Mammary epithelial cell (primary cell): ENCODE measurements at regions of chr12 and their contacts with region 1.

Region 1: GRCh38 chr12:72017054-72017651 is 78.5 kb downstream of the TPH2 start:
- DNase-seq: peak; percentile 74
- H3K4me3 ChIP-seq: no peak overlapping the region
- H3K27ac ChIP-seq: no peak overlapping the region
- H3K4me1 ChIP-seq: no peaks in the 10 kb centered on the region
- H3K27me3 ChIP-seq: no peaks in the 10 kb centered on the region
- CTCF ChIP-seq: peak; percentile 73 to 85

Region 2: DNA sequence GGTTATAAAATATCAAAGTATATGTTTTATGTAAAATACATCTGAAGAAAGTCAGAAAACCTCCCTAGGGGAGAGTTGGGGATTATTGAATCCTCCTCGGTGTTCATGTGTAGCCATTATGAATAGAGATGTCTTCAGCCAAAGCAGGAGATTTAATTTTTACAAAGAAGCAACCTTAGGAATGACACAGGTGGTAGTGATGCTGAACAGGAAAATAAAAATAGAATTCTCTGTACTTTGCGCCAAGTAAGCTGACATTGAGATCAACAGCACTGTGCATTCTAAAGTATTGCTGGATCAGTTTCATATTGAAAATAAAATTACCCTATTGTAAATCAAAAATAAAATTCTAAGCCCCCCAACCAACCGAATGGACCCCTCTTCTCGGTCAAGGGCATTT is 122.3 kb after region 1 on chr12:
- CTCF ChIA-PET with region 1: no interaction called
- dilution Hi-C with region 1: no loop called
- in situ Hi-C with region 1: no loop called
- intact Hi-C with region 1: loop called (anchors 1 kb)
- DNase-seq: no peak
- H3K4me3 ChIP-seq: no peak overlapping the region
- H3K27ac ChIP-seq: no peak overlapping the region
- H3K4me1 ChIP-seq: no peaks in the 10 kb centered on the region
- H3K27me3 ChIP-seq: no peaks in the 10 kb centered on the region
- CTCF ChIP-seq: no peak

Region 3: GRCh38 chr12:72264548-72265175 is 247.5 kb after region 1 on chr12:
- CTCF ChIA-PET with region 1: no interaction called
- dilution Hi-C with region 1: no loop called
- in situ Hi-C with region 1: no loop called
- intact Hi-C with region 1: loop called (anchors 1 kb)
- DNase-seq: no peak
- H3K4me3 ChIP-seq: no peak overlapping the region
- H3K27ac ChIP-seq: no peak overlapping the region
- H3K4me1 ChIP-seq: peaks cover 9% of the 10 kb centered on the region
- H3K27me3 ChIP-seq: no peaks in the 10 kb centered on the region
- CTCF ChIP-seq: peak; percentile 48 to 57

Region 4: GRCh38 chr12:72271451-72272090 is 254.4 kb after region 1 on chr12:
- CTCF ChIA-PET with region 1: no interaction called
- dilution Hi-C with region 1: no loop called
- in situ Hi-C with region 1: loop called in 1 of 2 experiments (anchors 5 kb)
- intact Hi-C with region 1: no loop called
- DNase-seq: peak; percentile 47
- H3K4me3 ChIP-seq: peak overlapping the region; percentile 72 to 85 (median 77)
- H3K27ac ChIP-seq: peak overlapping the region; percentile 79
- H3K4me1 ChIP-seq: peaks cover 26% of the 10 kb centered on the region
- H3K27me3 ChIP-seq: no peaks in the 10 kb centered on the region
- CTCF ChIP-seq: peak in 1 of 2 donors; percentile 20

Region 5: GRCh38 chr12:72282721-72283120 is 265.6 kb after region 1 on chr12:
- CTCF ChIA-PET with region 1: no interaction called
- dilution Hi-C with region 1: no loop called
- in situ Hi-C with region 1: loop called in 1 of 2 experiments (anchors 10 kb)
- intact Hi-C with region 1: loop called (anchors 1 kb)
- DNase-seq: peak; percentile 51
- H3K4me3 ChIP-seq: no peak overlapping the region
- H3K27ac ChIP-seq: no peak overlapping the region
- H3K4me1 ChIP-seq: peaks cover 21% of the 10 kb centered on the region
- H3K27me3 ChIP-seq: no peaks in the 10 kb centered on the region
- CTCF ChIP-seq: peak; percentile 65 to 82

Region 6: GRCh38 chr12:72346363-72346944 is 329.3 kb after region 1 on chr12:
- CTCF ChIA-PET with region 1: no interaction called
- dilution Hi-C with region 1: no loop called
- in situ Hi-C with region 1: no loop called
- intact Hi-C with region 1: loop called (anchors 2 kb)
- DNase-seq: peak; percentile 75
- H3K4me3 ChIP-seq: no peak overlapping the region
- H3K27ac ChIP-seq: no peak overlapping the region
- H3K4me1 ChIP-seq: no peaks in the 10 kb centered on the region
- H3K27me3 ChIP-seq: no peaks in the 10 kb centered on the region
- CTCF ChIP-seq: peak; percentile 50 to 71